Activated B cell treated with CpG ODN at 0.5 μM for 24 hours (primary cell): ENCODE measurements at regions of chr16 and their contacts with region 1.

Region 1: GRCh38 chr16:68528686-68529379 is 10.3 kb upstream of the ZFP90 start:
- DNase-seq: peak; percentile 81
- ATAC-seq: peak; percentile 82
- H3K4me3 Mint-ChIP-seq: peak overlapping the region; percentile 88
- H3K27ac Mint-ChIP-seq: peak overlapping the region; percentile 63
- H3K4me1 Mint-ChIP-seq: peaks cover 24% of the 10 kb centered on the region
- H3K27me3 Mint-ChIP-seq: no peaks in the 10 kb centered on the region
- CTCF ChIP-seq: no peak

Region 2: GRCh38 chr16:68324780-68325357 is 204.0 kb before region 1 on chr16:
- CTCF ChIA-PET with region 1: no interaction called
- POLR2A ChIA-PET with region 1: no interaction called
- intact Hi-C with region 1: no loop called
- DNase-seq: no peak
- ATAC-seq: no peak
- H3K4me3 Mint-ChIP-seq: no peak overlapping the region
- H3K27ac Mint-ChIP-seq: no peak overlapping the region
- H3K4me1 Mint-ChIP-seq: peaks cover 3% of the 10 kb centered on the region
- H3K27me3 Mint-ChIP-seq: no peaks in the 10 kb centered on the region
- CTCF ChIP-seq: no peak

Region 3: DNA sequence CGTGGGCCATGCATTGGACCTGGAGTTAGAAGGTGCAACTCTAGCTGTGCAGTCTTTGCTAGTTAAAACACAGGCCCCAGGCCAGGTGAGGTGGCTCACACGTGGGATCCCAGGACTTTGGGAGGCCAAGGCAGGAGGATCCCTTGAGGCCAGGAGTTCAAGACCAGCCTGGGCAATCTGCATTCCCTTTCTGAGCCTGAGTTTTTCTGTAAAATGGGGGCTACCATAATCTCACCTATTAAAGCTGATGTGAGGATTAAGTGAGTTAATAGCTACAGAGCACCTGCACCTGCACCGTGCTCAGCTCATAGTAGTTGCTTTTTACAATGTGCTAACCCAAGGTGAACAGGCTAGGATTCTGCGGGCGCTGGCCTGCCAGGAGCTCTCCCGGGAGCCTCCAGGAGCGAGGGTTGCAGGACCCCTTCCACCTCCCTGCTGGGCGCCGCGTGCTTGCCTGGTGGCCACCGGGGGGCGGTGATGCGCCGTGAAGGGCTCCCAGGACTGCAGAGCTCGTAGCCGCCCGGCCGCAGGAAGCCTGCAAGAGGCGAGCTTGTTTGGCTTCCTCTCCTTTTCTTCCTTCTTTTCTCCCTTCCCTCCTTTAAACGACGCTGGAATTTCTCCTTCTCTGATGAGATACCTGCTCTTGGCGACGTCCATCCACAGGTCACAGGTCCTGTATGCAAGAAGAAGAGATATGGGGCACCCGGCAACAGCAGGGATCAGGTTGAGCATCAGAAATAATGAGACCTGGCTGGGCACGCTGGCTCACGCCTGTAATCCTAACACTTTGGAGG is 61.6 kb after region 1 on chr16:
- CTCF ChIA-PET with region 1: interaction called, 12 read pairs
- POLR2A ChIA-PET with region 1: no interaction called
- intact Hi-C with region 1: loop called (anchors 2 kb)
- DNase-seq: peak; percentile 37
- ATAC-seq: peak; percentile 58
- H3K4me3 Mint-ChIP-seq: no peak overlapping the region
- H3K27ac Mint-ChIP-seq: no peak overlapping the region
- H3K4me1 Mint-ChIP-seq: no peaks in the 10 kb centered on the region
- H3K27me3 Mint-ChIP-seq: no peaks in the 10 kb centered on the region
- CTCF ChIP-seq: no peak

Region 4: GRCh38 chr16:68800257-68800875 is 271.5 kb after region 1 on chr16:
- CTCF ChIA-PET with region 1: interaction called, 21 read pairs
- POLR2A ChIA-PET with region 1: no interaction called
- intact Hi-C with region 1: loop called (anchors 1 kb)
- DNase-seq: peak; percentile 23
- ATAC-seq: peak; percentile 98
- H3K4me3 Mint-ChIP-seq: no peak overlapping the region
- H3K27ac Mint-ChIP-seq: peak overlapping the region; percentile 24
- H3K4me1 Mint-ChIP-seq: peaks cover 4% of the 10 kb centered on the region
- H3K27me3 Mint-ChIP-seq: peaks cover under 1% of the 10 kb centered on the region
- CTCF ChIP-seq: no peak

Region 5: GRCh38 chr16:69132424-69133252 is 603.8 kb after region 1 on chr16 and contains the starts of genes CHTF8 and UTP4:
- CTCF ChIA-PET with region 1: interaction called, 4 read pairs
- POLR2A ChIA-PET with region 1: interaction called, 8 read pairs
- intact Hi-C with region 1: loop called (anchors 1 kb)
- DNase-seq: peak; percentile 89
- ATAC-seq: peak; percentile 85
- H3K4me3 Mint-ChIP-seq: peak within 1 kb of the TSS; percentile 94
- H3K27ac Mint-ChIP-seq: peak within 1 kb of the TSS; percentile 85
- H3K4me1 Mint-ChIP-seq: peaks cover 47% of the 10 kb centered on the region
- H3K27me3 Mint-ChIP-seq: no peaks in the 10 kb centered on the region
- CTCF ChIP-seq: no peak
- total RNA-seq, gene CHTF8: 134 and 143 TPM in 2 replicates
- total RNA-seq, gene UTP4: 53.5 and 55.3 TPM in 2 replicates